H1 (cell line): ENCODE measurements at regions of chr1 and their contacts with region 1.

Region 1: GRCh38 chr1:204623894-204624361 is 61.6 kb downstream of the LRRN2 start:
- DNase-seq: no peak
- H3K4me3 ChIP-seq: no peak overlapping the region
- H3K27ac ChIP-seq: no peak overlapping the region
- H3K4me1 ChIP-seq: peaks cover 3 to 11% (median 6%) of the 10 kb centered on the region in 4 experiments; a peak in 6 of 7 replicates
- H3K27me3 ChIP-seq: no peaks in the 10 kb centered on the region
- CTCF ChIP-seq: peak; percentile 40 to 81 (median 44)
- EP300 ChIP-seq: no peak
- POLR2A ChIP-seq: no peak
- RAD21 ChIP-seq: peak; percentile 31 to 48; a peak in 3 of 4 replicates

Region 2: DNA sequence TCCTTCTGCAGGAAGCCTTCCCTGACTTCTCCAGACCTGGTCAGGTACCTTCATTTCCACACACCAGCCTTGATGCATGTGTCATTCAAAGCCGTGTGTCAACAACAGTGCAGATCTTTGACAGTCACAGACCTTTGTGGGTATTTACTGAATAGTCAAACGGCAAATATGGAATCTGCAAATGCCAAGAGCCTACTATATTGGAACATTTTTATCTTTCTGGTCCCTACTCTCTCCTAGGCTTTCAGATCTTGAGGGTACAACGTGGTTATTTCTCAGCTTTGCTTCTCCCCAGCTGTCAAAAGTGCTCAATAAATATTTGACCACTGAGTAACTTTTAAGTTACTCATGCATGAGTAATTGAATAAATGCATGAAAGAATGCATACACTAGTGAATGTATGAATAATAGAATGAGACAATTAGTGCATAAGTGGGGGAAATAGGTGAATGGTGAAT is 32.3 kb before region 1 on chr1:
- CTCF ChIA-PET with region 1: interaction called, 17 read pairs
- POLR2A ChIA-PET with region 1: no interaction called
- DNase-seq: no peak
- H3K4me3 ChIP-seq: no peak overlapping the region
- H3K27ac ChIP-seq: no peak overlapping the region
- H3K4me1 ChIP-seq: peaks cover 3 to 7% (median 5%) of the 10 kb centered on the region in 4 experiments; a peak in 5 of 7 replicates
- H3K27me3 ChIP-seq: no peaks in the 10 kb centered on the region
- CTCF ChIP-seq: no peak
- EP300 ChIP-seq: no peak
- POLR2A ChIP-seq: no peak
- RAD21 ChIP-seq: no peak

Region 3: DNA sequence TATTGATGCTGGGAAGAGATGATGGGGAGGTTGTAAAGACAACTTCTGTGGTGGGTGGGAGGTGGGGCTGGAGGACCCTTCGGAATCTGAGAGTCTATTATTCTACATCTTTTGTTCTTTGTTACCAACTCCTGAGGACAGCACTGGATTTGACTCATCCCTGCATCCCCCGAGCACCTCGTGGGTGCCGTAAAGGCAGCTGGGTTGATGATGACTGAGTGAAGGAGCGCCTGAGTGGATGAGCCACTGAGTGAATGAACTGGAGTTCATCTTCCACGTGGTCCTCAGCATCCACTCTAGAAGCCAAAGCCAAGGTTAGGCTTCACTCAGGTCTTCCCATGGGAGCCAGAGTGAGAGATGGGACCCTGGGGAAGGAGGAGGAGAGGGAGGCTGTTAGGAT is 16.0 kb before region 1 on chr1:
- CTCF ChIA-PET with region 1: interaction called, 40 read pairs
- POLR2A ChIA-PET with region 1: interaction called, 3 read pairs
- DNase-seq: no peak
- H3K4me3 ChIP-seq: no peak overlapping the region
- H3K27ac ChIP-seq: no peak overlapping the region
- H3K4me1 ChIP-seq: peaks cover 0 to 3% (median under 1%) of the 10 kb centered on the region in 4 experiments; a peak in 2 of 7 replicates
- H3K27me3 ChIP-seq: no peaks in the 10 kb centered on the region
- CTCF ChIP-seq: no peak
- EP300 ChIP-seq: no peak
- POLR2A ChIP-seq: no peak
- RAD21 ChIP-seq: no peak

Region 4: GRCh38 chr1:204640578-204640977 is 16.6 kb after region 1 on chr1:
- CTCF ChIA-PET with region 1: interaction called, 13 read pairs
- POLR2A ChIA-PET with region 1: interaction called, 3 read pairs
- DNase-seq: no peak
- H3K4me3 ChIP-seq: no peak overlapping the region
- H3K27ac ChIP-seq: no peak overlapping the region
- H3K4me1 ChIP-seq: no peaks in the 10 kb centered on the region
- H3K27me3 ChIP-seq: no peaks in the 10 kb centered on the region
- CTCF ChIP-seq: 0 out of 4 replicates have a peak, but pooled peaks of 1 of the 3 experiments have one; percentile 16
- EP300 ChIP-seq: no peak
- POLR2A ChIP-seq: no peak
- RAD21 ChIP-seq: no peak; a peak in 1 of 4 replicates

Region 5: DNA sequence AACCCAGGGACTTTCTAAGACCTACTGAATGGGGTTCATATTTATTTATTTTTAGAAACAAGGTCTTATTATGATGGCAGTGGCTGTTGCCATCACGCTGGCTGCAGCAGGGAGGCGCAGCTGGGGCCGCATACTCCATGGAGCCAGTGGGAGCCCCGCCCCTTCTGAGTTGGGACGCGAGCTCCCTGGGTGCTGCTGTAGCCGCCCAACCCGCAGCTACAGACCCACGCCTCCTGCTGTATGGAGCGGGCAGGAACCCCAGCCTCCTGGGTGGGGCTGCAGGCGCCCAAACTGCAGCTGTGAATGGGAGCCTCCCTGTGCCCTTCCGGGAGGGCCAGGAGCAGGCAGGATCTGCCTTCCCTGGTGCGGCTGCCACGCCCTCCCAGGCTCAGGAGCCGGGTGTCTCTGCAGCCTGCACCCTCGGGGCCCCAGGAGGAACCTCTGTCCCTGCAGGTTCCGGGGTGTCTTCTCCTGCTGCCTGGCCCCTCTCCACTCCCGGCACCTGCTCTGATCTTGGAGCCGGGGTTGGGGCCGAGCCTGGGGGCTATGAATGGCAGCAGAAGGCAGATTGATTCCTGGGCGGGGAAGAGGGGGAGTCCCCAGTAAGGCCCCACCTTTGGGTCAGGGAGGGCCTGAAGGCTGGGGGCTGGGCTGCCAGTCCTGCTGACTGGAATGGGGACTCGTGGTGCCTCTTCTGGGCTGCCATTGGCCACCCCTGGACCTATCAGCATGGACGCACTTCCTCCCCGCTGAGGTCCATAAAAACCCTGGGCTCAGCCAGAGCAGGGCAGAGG is 128.2 kb after region 1 on chr1:
- CTCF ChIA-PET with region 1: interaction called, 17 read pairs
- POLR2A ChIA-PET with region 1: no interaction called
- DNase-seq: peak; percentile 31 to 65
- H3K4me3 ChIP-seq: no peak overlapping the region
- H3K27ac ChIP-seq: no peak overlapping the region
- H3K4me1 ChIP-seq: peaks cover 0 to 7% (median 5%) of the 10 kb centered on the region in 4 experiments; a peak in 5 of 7 replicates
- H3K27me3 ChIP-seq: no peaks in the 10 kb centered on the region
- CTCF ChIP-seq: no peak; a peak in 1 of 4 replicates
- EP300 ChIP-seq: no peak
- POLR2A ChIP-seq: no peak
- RAD21 ChIP-seq: peak in 1 of 2 experiments; percentile 26; a peak in 1 of 4 replicates

Region 6: GRCh38 chr1:204791453-204792353 is 167.8 kb after region 1 on chr1:
- CTCF ChIA-PET with region 1: interaction called, 12 read pairs
- POLR2A ChIA-PET with region 1: no interaction called
- DNase-seq: peak; percentile 79 to 95
- H3K4me3 ChIP-seq: no peak overlapping the region
- H3K27ac ChIP-seq: no peak overlapping the region
- H3K4me1 ChIP-seq: no peaks in the 10 kb centered on the region
- H3K27me3 ChIP-seq: no peaks in the 10 kb centered on the region; a peak in 2 of 7 replicates
- CTCF ChIP-seq: peak; percentile 79 to 95 (median 91)
- EP300 ChIP-seq: no peak
- POLR2A ChIP-seq: no peak
- RAD21 ChIP-seq: peak; percentile 47 to 62; a peak in 3 of 4 replicates

Region 7: GRCh38 chr1:205012391-205013140 is 388.6 kb after region 1 on chr1:
- CTCF ChIA-PET with region 1: no interaction called
- POLR2A ChIA-PET with region 1: no interaction called
- DNase-seq: no peak
- H3K4me3 ChIP-seq: no peak overlapping the region
- H3K27ac ChIP-seq: no peak overlapping the region
- H3K4me1 ChIP-seq: peaks cover 0 to 21% (median 7%) of the 10 kb centered on the region in 4 experiments; a peak in 5 of 7 replicates
- H3K27me3 ChIP-seq: no peaks in the 10 kb centered on the region
- CTCF ChIP-seq: no peak
- EP300 ChIP-seq: no peak
- POLR2A ChIP-seq: no peak
- RAD21 ChIP-seq: no peak